Activated CD4-positive, alpha-beta memory T cell treated with anti-CD3 and anti-CD28 coated beads for 36 hours (primary cell): ENCODE measurements at regions of chr22 and their contacts with region 1.

Region 1: GRCh38 chr22:36180038-36180880 is 19.7 kb upstream of the APOL3 start:
- DNase-seq: peak; percentile 89
- H3K4me3 Mint-ChIP-seq: no peak overlapping the region
- H3K27ac Mint-ChIP-seq: no peak overlapping the region
- H3K4me1 Mint-ChIP-seq: peaks cover 6% of the 10 kb centered on the region
- H3K27me3 Mint-ChIP-seq: no peaks in the 10 kb centered on the region

Region 2: DNA sequence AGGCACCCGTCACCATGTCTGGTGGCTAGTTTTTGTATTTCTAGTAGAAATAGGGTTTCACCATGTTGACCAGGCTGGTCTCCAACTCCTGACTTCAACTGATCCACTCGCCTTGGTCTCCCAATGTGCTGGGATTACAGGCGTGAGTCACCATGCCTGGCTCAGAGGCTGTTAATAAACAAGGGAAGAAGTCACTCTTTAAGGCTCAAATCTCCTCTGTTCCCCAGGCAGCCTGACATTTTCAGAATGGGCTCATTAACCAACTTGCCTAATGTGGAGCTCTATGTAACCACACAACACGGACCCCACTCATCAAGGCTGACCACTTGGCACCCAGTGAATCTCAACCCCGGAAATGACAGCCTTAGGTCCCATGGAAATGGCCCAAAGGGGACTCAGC is 43.8 kb before region 1 on chr22:
- CTCF ChIA-PET with region 1: interaction called, 96 read pairs
- POLR2A ChIA-PET with region 1: no interaction called
- intact Hi-C with region 1: no loop called
- DNase-seq: no peak
- H3K4me3 Mint-ChIP-seq: no peak overlapping the region
- H3K27ac Mint-ChIP-seq: no peak overlapping the region
- H3K4me1 Mint-ChIP-seq: peaks cover 21% of the 10 kb centered on the region
- H3K27me3 Mint-ChIP-seq: no peaks in the 10 kb centered on the region

Region 3: DNA sequence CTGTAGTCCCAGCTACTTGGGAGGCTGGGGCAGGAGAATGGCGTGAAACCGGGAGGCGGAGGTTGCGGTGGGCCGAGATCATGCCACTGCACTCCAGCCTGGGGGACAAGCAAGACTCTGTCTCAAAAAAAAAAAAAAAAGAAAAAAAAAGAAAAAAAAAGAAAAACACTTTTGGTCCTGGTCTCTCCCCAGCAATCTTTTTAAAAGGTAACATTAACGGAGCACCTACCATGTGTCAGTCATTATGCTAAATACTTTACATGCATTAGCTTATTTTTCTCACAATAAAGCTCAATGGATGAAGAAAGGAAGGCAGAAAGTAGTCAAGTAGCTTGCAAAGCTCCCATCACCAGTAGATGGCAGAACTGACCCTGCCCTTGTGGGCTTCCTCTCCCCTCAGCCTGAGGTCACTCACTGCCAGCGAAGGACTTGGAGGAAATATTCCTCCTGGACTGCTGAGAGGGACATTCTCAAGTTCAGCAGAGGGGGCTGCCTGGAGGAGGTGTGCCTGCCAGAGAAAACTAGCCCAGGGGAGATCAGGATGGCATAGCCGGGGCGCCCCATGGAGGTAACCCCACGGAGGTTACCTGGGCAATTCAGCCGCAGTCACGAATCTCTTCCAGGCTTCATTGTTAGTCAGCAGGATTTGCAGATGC is 35.2 kb before region 1 on chr22:
- CTCF ChIA-PET with region 1: interaction called, 96 read pairs
- POLR2A ChIA-PET with region 1: no interaction called
- intact Hi-C with region 1: loop called (anchors 1 kb)
- DNase-seq: peak; percentile 55
- H3K4me3 Mint-ChIP-seq: no peak overlapping the region
- H3K27ac Mint-ChIP-seq: peak overlapping the region; percentile 36
- H3K4me1 Mint-ChIP-seq: peaks cover 17% of the 10 kb centered on the region
- H3K27me3 Mint-ChIP-seq: no peaks in the 10 kb centered on the region